ENCODE measurements at regions of chr4 and their contacts with region 1.

Region 1: GRCh38 chr4:47836641-47837093 is 1.2 kb downstream of the CORIN start:
- DNase-seq: peak; percentile 89
- ATAC-seq: peak; percentile 89

Region 2: DNA sequence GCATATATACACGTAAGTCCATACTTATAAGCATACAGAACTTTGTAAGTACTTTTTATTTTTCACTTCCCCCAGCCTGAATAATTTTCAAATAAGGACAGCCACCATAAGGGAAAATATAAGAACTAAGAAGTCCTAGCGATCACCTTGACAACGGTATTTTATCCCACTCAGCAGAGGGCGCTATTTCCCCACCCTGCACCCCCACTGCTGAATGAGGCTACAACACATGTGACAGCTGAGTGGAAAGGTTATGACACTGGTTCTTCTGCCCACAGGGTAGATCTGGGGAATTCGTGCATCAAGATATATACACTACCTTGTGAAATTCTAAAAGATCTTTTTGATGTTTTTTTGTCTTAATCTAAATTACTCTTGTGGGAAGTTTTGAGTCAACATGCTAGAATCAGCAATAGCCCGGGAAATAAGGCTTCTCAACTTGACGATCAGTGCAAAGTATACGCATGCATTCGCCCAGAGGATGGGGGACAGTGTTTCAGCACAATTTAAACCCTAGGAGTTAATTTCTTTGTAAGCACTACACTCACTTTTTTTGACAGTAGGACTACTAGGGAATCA is 150.3 kb before region 1 on chr4:
- intact Hi-C with region 1: no loop called
- DNase-seq: peak; percentile 50
- ATAC-seq: peak; percentile 90

Region 3: GRCh38 chr4:47704693-47705325 is 131.9 kb before region 1 on chr4:
- intact Hi-C with region 1: loop called (anchors 2 kb)
- DNase-seq: no peak
- ATAC-seq: peak; percentile 95

Measured in Right ventricle myocardium superior (tissue), 1 donor.